Left colon (tissue), 2 donors: ENCODE measurements at regions of chr16 and their contacts with region 1.

Region 1: GRCh38 chr16:66894948-66895688 is 14.8 kb downstream of the PDP2 start:
- DNase-seq: peak; percentile 76 to 82
- ATAC-seq: peak; percentile 78

Region 2: DNA sequence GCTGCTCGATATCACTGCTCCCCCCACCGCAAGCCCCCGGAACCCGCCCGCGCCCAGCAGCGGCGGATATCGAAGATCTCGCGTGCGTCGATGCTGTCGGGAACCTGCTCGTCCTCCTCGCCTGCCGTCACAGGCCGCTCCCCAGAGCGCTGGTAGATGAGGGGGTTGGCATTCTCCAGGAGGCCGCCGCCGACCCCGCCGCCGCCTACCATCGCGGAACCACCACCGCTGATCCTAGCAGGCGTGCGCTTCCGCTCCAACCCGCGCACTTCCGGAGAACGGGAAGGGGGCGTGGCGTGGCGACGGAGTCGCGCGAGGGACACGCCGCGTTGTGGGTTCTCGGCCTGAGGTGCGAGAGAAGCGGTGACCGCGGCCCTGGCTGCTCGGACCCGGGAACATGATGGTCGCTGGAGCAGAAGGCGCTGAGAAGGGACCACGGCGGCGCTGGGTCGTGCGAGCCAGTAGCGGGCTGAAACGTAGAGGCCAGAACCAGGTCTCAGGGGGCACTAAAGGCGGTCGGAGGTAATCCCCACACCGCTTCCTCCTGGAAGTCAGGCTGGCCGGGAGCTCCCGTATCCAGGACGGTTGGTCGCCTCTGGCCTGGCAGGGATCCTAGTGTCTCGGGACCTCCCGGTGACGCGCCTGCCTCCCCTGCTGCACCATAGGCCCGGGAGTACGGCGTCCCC is 39.2 kb after region 1 on chr16 and contains the start of gene CIAO2B:
- intact Hi-C with region 1: loop called in 1 of 2 experiments (anchors 5 kb)
- DNase-seq: peak; percentile 86 to 93
- ATAC-seq: peak; percentile 65
- total RNA-seq, gene CIAO2B: 82.7 to 109 TPM